Activated CD4-positive, alpha-beta memory T cell treated with anti-CD3 and anti-CD28 coated beads, Interleukin-2, amount 10 ng/mL, durations not matched to agents 7 days and 5 days (primary cell): ENCODE measurements at regions of chr4 and their contacts with region 1.

Region 1: GRCh38 chr4:113761620-113762185 is at the start of gene CAMK2D:
- DNase-seq: peak; percentile 81
- H3K4me3 Mint-ChIP-seq: peak within 1 kb of the TSS; percentile 83
- H3K27ac Mint-ChIP-seq: peak within 1 kb of the TSS; percentile 100
- H3K4me1 Mint-ChIP-seq: peaks cover 30% of the 10 kb centered on the region
- H3K27me3 Mint-ChIP-seq: no peaks in the 10 kb centered on the region
- total RNA-seq, gene CAMK2D: 41.7 to 43.0 TPM

Region 2: DNA sequence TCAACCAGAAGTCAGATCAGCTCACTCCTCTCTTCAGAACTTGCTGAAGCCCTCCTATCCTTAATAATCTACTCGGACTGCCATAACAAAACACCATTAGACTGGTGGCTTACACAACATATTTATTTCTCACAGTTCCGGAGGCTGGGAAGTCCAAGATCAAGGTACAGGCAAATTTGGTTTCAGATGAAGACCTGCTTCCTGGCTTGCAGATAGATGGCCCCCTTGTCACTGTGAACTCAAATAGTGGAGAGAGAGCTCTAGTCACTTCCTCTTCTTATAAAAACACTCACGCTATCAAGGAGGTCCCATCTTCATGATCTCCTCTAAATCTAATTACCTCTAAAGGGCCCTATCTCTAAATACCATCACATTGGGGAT is 125.3 kb before region 1 on chr4:
- CTCF ChIA-PET with region 1: interaction called, 5 read pairs
- POLR2A ChIA-PET with region 1: interaction called, 17 read pairs
- DNase-seq: peak; percentile 17
- H3K4me3 Mint-ChIP-seq: peak overlapping the region; percentile 41
- H3K27ac Mint-ChIP-seq: peak overlapping the region; percentile 70
- H3K4me1 Mint-ChIP-seq: peaks cover 41% of the 10 kb centered on the region
- H3K27me3 Mint-ChIP-seq: no peaks in the 10 kb centered on the region

Region 3: DNA sequence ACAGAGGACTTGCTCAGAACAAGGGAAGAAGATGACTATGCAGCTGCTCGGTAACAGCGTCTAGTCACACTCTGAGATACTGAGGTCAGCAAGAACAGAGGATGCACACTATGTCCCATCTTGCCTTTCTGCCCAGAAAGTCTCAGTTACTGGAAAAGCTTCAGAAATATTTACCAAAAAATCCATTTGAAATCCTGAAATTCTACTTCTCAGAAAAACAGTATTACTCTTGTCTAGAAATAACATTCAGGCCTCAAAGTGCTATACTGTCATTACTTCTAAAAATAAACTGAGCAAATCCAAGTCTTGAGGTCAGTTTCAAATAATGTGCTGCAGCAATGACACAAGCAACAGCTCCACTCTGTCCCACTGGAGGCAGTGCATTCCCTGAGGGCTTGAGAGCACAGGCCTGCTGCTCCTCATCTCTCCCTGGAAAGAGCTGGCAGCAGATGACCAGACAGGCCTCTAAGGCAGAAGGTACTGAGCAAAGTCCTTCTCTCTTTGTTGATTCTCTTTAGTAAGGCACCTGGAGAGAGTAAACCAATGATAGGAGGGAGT is 77.1 kb before region 1 on chr4:
- CTCF ChIA-PET with region 1: no interaction called
- POLR2A ChIA-PET with region 1: interaction called, 14 read pairs
- DNase-seq: peak; percentile 42
- H3K4me3 Mint-ChIP-seq: no peak overlapping the region
- H3K27ac Mint-ChIP-seq: peak overlapping the region; percentile 85
- H3K4me1 Mint-ChIP-seq: peaks cover 56% of the 10 kb centered on the region
- H3K27me3 Mint-ChIP-seq: no peaks in the 10 kb centered on the region